ENCODE measurements at regions of chrX and their contacts with region 1.

Region 1: DNA sequence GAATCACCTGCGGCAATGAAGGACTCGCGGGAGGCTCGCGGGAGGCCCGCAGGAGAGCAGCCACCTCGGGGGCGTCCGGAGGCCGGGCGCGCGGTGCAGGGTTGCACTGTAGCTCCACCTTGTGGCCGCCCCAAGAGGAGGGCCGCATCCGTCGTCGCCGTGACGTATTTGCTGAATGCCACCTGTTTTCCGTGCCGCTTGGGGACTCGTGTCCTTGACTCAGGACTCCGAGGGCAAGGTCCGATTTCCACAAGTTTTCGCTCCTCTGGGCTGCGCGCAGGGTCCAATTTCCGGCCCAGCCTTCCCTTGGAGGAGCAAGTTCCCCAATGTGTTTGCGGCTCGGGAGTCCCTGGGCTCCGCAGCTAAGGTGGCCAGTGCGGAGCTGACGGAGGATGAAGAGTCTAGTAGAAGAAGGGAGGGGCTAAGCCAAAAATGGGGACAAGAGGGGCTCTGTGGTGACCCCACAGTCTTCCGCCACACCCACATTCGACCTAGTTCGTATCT is 10.7 kb upstream of the DLG3 start:
- DNase-seq: peak; percentile 64
- ATAC-seq: peak; percentile 66
- H3K4me3 ChIP-seq: peak overlapping the region; percentile 93
- H3K27ac ChIP-seq: 0 out of 2 replicates have a peak overlapping the region, but pooled peaks have one; percentile 37
- H3K4me1 ChIP-seq: peaks cover 22% of the 10 kb centered on the region
- H3K27me3 ChIP-seq: no peaks in the 10 kb centered on the region
- CTCF ChIP-seq: peak; percentile 72

Region 2: DNA sequence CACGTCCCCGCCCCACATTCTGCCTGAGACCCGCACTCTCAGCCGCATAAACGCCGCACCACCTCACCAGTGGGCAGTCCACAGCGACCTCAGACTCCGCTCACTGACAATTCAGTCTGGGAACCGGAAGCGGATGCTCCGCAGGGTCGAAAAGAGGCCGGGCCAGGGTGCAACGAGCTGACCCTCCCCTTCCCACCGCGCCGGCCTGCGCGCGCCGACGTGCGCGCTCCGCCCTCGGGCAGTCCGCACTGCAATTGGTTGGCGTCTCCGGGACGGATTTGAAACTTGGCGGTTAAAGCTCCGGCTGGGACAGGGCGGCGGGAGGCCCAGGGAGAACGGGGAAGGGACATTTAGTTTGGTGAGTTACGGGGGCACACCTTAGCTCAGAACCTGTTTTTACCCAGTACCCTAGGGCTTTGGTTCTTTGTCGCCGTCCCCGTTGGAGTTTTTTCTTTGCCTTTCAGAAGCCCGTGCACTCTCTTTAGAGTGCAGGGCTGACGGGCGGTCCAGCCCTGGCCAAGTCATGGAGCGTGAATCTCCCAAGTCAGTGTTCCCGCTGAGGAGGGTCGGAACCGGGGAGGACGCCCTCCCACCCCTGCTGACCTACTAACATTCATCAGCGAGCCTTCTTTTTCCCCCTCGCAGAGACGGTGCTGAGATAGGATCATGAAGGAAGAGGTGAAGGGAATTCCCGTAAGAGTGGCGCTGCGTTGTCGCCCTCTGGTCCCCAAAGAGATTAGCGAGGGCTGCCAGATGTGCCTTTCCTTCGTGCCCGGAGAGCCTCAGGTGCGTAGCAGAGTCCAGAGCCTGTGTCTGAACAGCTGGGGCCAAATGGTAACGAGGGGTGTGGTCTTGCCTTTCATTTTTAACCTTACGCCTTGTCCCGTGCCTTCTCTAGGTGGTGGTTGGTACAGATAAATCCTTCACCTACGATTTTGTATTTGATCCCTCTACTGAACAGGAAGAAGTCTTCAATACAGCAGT is 143.8 kb before region 1 on chrX and contains the starts of genes KIF4A and PDZD11:
- CTCF ChIA-PET with region 1: no interaction called
- POLR2A ChIA-PET with region 1: no interaction called
- intact Hi-C with region 1: loop called (anchors 2 kb)
- DNase-seq: peak; percentile 88
- ATAC-seq: peak; percentile 93
- H3K4me3 ChIP-seq: peak within 1 kb of the TSS; percentile 93
- H3K27ac ChIP-seq: peak within 1 kb of the TSS; percentile 52
- H3K4me1 ChIP-seq: peaks cover 23% of the 10 kb centered on the region
- H3K27me3 ChIP-seq: no peaks in the 10 kb centered on the region
- CTCF ChIP-seq: no peak
- total RNA-seq, gene KIF4A: 35.8 and 43.5 TPM in 2 replicates
- total RNA-seq, gene PDZD11: 69.5 and 83.0 TPM in 2 replicates

Region 3: GRCh38 chrX:70331161-70331560 is 102.7 kb before region 1 on chrX:
- CTCF ChIA-PET with region 1: no interaction called
- POLR2A ChIA-PET with region 1: no interaction called
- intact Hi-C with region 1: loop called (anchors 1 kb)
- DNase-seq: peak; percentile 51
- ATAC-seq: peak; percentile 92
- H3K4me3 ChIP-seq: no peak overlapping the region
- H3K27ac ChIP-seq: no peak overlapping the region
- H3K4me1 ChIP-seq: peaks cover 5% of the 10 kb centered on the region; the same call in 1 of the 2 replicates
- H3K27me3 ChIP-seq: no peaks in the 10 kb centered on the region
- CTCF ChIP-seq: no peak

Region 4: GRCh38 chrX:70664726-70665125 is 230.8 kb after region 1 on chrX:
- CTCF ChIA-PET with region 1: no interaction called
- POLR2A ChIA-PET with region 1: no interaction called
- intact Hi-C with region 1: loop called (anchors 2 kb)
- DNase-seq: peak; percentile 49
- ATAC-seq: peak; percentile 50
- H3K4me3 ChIP-seq: no peak overlapping the region
- H3K27ac ChIP-seq: no peak overlapping the region
- H3K4me1 ChIP-seq: no peaks in the 10 kb centered on the region
- H3K27me3 ChIP-seq: peaks cover 16% of the 10 kb centered on the region
- CTCF ChIP-seq: peak; percentile 58; the same call in 1 of the 2 replicates